ENCODE measurements at regions of chr10 and their contacts with region 1.

Region 1: DNA sequence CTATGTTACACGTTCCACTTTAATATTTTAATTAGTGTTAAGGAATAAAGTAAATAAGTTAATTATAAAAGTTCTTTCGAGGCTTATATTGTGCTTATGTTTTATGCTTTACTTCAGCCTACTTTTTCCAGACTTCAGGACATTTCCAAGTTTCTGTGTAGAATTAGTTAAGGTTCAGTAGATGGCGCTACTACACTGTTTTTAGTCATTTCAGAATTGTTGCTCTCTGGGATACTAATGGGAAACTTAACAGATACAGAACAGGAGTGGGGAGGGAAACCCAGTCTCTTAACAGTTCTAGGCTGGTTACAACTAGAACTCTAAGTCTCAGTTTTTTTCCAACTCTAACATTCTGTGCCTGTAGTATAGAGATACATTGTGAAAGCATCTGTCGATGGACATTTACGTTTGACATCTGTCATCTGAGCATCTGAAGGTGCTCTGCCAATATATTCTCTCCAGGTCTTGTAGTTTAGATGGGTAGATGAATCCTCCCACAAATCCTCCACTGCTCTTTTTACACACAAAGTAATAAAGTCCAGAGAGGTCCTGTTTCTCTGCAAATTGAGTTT is 56.8 kb upstream of the FAM171A1 start:
- DNase-seq: no peak
- H3K4me3 ChIP-seq: no peak overlapping the region
- H3K4me3 Mint-ChIP-seq: no peak overlapping the region
- H3K27ac Mint-ChIP-seq: no peak overlapping the region
- H3K4me1 ChIP-seq: peaks cover 4% of the 10 kb centered on the region; the same call in 1 of the 2 replicates
- H3K4me1 Mint-ChIP-seq: peaks cover 6% of the 10 kb centered on the region
- H3K27me3 ChIP-seq: no peaks in the 10 kb centered on the region
- H3K27me3 Mint-ChIP-seq: peaks cover 3% of the 10 kb centered on the region
- CTCF ChIP-seq: peak; percentile 58 to 70

Region 2: GRCh38 chr10:15445006-15445390 is 17.1 kb after region 1 on chr10:
- CTCF ChIA-PET with region 1: no interaction called
- POLR2A ChIA-PET with region 1: no interaction called
- intact Hi-C with region 1: no loop called
- DNase-seq: no peak
- H3K4me3 ChIP-seq: no peak overlapping the region
- H3K4me3 Mint-ChIP-seq: no peak overlapping the region
- H3K27ac Mint-ChIP-seq: no peak overlapping the region
- H3K4me1 ChIP-seq: peaks cover 5% of the 10 kb centered on the region
- H3K4me1 Mint-ChIP-seq: peaks cover 6% of the 10 kb centered on the region
- H3K27me3 ChIP-seq: peaks cover 2% of the 10 kb centered on the region; the same call in 1 of the 2 replicates
- H3K27me3 Mint-ChIP-seq: peaks cover 12% of the 10 kb centered on the region
- CTCF ChIP-seq: no peak

Region 3: GRCh38 chr10:15744217-15744865 is 316.4 kb after region 1 on chr10:
- CTCF ChIA-PET with region 1: no interaction called
- POLR2A ChIA-PET with region 1: no interaction called
- intact Hi-C with region 1: loop called (anchors 1 kb)
- DNase-seq: peak; percentile 69 to 75
- H3K4me3 ChIP-seq: no peak overlapping the region
- H3K4me3 Mint-ChIP-seq: no peak overlapping the region
- H3K27ac Mint-ChIP-seq: no peak overlapping the region
- H3K4me1 ChIP-seq: no peaks in the 10 kb centered on the region
- H3K4me1 Mint-ChIP-seq: no peaks in the 10 kb centered on the region
- H3K27me3 ChIP-seq: no peaks in the 10 kb centered on the region
- H3K27me3 Mint-ChIP-seq: peaks cover 26% of the 10 kb centered on the region
- CTCF ChIP-seq: peak; percentile 66 to 85

Region 4: DNA sequence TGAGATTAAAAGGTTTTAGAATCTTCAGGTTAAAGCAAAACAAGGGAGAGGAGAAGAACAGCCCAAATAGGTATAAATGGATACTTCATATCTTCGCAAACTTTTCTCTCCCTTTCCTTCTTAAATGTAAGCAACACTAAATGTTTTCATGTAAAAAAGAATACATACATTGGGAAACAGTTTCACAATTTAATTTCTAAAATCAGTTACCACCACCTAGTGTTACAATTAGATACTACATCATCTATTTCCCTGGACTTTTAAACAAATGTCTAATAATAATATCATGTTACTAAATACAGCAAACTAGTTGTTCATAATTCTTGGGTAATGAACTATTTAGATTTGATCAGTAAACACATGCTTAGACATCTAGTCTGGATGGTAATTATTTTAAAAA is 396.6 kb after region 1 on chr10:
- CTCF ChIA-PET with region 1: no interaction called
- POLR2A ChIA-PET with region 1: no interaction called
- intact Hi-C with region 1: loop called (anchors 1 kb)
- DNase-seq: no peak
- H3K4me3 ChIP-seq: no peak overlapping the region
- H3K4me3 Mint-ChIP-seq: no peak overlapping the region
- H3K27ac Mint-ChIP-seq: no peak overlapping the region
- H3K4me1 ChIP-seq: no peaks in the 10 kb centered on the region
- H3K4me1 Mint-ChIP-seq: no peaks in the 10 kb centered on the region
- H3K27me3 ChIP-seq: no peaks in the 10 kb centered on the region
- H3K27me3 Mint-ChIP-seq: no peaks in the 10 kb centered on the region
- CTCF ChIP-seq: peak; percentile 31 to 58

Measured in Caco-2 (cell line).